Caco-2 (cell line): ENCODE measurements at regions of chr1 and their contacts with region 1.

Region 1: DNA sequence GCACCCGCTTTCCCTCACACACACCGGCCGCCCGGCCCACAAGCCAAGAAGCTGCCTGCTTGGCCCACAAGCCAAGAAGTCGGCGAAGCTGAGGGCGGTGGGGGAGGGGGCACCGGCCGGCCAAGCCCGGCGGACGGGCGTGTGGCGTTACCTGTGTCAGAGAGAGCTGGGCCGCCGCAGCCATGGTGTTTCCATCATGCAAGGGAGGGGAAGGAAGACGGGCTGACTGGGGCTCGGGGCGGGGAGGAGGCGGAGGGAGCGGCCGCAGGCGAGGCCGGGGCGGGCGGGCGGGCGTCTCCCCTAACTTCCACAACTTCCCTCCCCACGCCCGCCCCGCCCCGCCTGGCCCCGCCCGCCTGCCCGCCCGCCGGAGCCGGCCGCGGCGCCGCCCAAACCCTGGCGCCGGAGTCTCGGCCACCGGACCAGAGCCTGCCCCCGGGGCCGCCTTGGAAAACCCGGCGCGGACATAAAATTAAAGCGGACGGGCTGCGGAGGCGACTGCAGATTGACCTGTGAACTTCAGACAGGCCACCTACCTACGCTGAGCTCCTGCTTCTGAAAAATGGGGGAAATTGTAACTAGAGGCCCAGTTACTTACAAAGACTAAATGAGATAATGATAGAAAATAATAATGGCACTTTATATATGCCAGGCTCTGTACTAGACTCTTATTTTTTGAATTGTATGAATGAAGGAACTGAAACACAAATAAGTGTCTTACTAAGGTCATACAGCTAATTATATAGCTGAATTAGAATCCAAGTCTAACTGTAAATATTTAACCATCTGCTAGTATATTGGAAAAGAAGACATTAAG is at the start of gene EPS15:
- DNase-seq: peak; percentile 88 to 91
- H3K4me3 ChIP-seq: peak within 1 kb of the TSS; percentile 85
- H3K4me3 Mint-ChIP-seq: peak within 1 kb of the TSS; percentile 95
- H3K27ac Mint-ChIP-seq: peak within 1 kb of the TSS; percentile 89
- H3K4me1 ChIP-seq: peaks cover 15% of the 10 kb centered on the region
- H3K4me1 Mint-ChIP-seq: peaks cover 11% of the 10 kb centered on the region
- H3K27me3 ChIP-seq: no peaks in the 10 kb centered on the region
- H3K27me3 Mint-ChIP-seq: no peaks in the 10 kb centered on the region
- CTCF ChIP-seq: no peak
- total RNA-seq, gene EPS15: 39.2 and 41.5 TPM in 2 replicates

Region 2: DNA sequence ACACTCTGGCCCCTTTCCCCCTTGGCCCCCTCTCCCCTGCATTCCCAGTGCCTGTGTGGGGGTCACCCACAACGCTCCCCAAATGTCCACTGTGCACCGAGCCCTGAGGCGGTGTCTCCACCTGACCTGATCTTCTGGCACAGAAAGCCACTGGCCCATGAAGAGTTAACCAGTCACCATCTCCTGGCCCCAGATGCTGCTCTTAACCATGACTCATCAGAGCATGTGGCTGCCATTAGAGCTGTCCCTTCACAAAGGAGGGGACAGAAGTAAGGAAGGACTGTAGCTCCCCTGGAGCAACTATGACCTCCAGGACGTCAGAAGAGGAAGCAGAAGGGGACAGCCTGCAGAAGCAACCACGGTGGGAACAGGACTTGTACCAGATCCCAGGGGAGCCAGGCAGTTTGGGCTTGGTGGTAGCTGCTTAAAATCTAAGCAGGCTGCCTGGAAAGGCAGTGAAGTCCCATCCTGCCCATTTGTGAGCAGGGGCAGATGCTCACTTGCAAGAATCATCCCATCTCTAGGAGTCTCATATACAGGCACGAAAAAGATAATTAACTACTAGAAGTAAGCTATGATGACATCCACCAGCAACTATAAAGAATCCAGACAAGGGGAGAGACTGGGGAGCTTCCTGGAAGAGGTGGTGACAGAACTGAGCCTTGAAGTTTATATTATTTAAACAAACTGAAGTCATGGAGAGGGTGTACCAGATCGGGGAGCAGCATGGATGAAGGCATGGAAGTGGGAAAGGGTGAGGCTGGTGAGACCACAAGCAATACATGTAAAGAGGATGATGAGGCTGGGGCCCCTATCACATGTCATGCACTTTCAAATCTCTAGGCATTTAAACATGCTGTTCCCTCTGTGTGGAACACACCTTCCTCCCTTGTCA is 187.8 kb before region 1 on chr1:
- CTCF ChIA-PET with region 1: no interaction called
- POLR2A ChIA-PET with region 1: no interaction called
- intact Hi-C with region 1: loop called (anchors 1 kb)
- DNase-seq: peak; percentile 64 to 78
- H3K4me3 ChIP-seq: peak overlapping the region; percentile 71
- H3K4me3 Mint-ChIP-seq: peak overlapping the region; percentile 83
- H3K27ac Mint-ChIP-seq: peak overlapping the region; percentile 90
- H3K4me1 ChIP-seq: peaks cover 30% of the 10 kb centered on the region
- H3K4me1 Mint-ChIP-seq: peaks cover 19% of the 10 kb centered on the region
- H3K27me3 ChIP-seq: no peaks in the 10 kb centered on the region
- H3K27me3 Mint-ChIP-seq: no peaks in the 10 kb centered on the region
- CTCF ChIP-seq: no peak

Region 3: DNA sequence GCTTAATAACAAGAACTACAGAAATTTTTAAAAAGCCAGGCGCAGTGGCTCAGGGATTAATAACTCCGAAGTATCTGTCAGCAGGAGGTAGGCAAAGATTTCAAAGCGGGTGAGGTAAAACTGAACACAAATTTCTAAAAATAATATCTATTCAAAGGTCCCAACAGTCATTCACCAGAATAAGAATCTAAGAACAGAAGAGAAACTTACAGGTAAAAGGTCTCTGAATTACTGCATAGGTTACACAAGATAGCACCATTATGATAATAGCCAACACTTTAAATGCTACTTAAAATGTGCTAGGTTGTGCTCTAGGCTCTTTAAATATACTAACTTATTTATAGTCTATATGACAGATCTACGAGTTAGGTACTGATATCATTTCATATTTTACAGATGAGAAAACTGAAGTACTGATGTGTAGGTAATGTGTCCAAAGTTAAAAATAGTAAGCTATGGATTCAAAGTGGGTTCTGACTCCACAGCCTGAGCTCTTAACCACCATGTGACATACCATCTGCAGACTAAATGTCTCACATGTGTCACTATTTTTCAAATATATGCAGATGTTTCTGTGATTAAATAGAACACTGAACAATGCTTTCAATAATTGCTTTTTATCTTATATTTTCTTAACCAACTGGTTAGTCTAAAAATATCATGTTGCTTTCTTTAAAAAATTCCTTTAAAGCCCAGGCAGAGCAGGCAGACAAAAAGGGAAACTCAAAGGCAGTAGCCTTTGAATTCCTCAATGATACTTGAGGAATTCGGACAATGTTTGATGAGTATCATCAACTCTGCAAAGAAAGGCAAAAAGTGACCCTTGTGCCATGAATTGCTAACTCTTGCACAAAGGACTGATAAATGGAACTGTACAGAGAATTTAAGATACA is 108.4 kb before region 1 on chr1:
- CTCF ChIA-PET with region 1: no interaction called
- POLR2A ChIA-PET with region 1: no interaction called
- intact Hi-C with region 1: loop called (anchors 2 kb)
- DNase-seq: peak in 1 of 2 experiments; percentile 55
- H3K4me3 ChIP-seq: no peak overlapping the region
- H3K4me3 Mint-ChIP-seq: peak overlapping the region; percentile 29
- H3K27ac Mint-ChIP-seq: peak overlapping the region; percentile 77
- H3K4me1 ChIP-seq: peaks cover 41% of the 10 kb centered on the region
- H3K4me1 Mint-ChIP-seq: peaks cover 8% of the 10 kb centered on the region
- H3K27me3 ChIP-seq: no peaks in the 10 kb centered on the region
- H3K27me3 Mint-ChIP-seq: no peaks in the 10 kb centered on the region
- CTCF ChIP-seq: no peak

Region 4: DNA sequence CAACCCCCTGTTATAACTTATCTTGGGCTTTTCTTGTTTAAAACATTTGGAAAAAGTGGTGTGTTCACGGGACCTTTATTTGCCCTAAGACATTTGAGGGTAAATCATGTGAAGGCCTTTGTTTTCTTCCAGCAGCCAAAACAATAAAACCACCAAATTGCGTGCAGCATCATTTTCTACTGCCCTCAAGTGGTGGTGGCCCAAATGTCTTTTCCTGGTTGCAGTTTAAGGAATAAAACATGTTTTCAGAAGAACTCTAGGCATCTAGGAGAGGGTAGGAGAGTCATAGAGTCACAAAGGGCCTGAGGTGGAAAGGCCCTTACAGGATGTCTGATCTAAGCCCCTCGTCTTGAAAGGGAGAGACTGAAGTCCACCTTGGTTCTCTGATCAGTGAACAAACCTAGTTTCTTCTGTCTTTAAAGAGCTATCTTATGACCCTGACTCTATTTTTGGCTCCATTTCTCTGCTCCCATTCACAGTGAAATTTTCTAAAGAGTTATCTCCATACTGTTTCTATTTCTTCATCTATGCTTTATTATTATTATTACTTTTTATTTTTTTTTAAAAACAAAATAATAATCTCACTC is 15.8 kb after region 1 on chr1:
- CTCF ChIA-PET with region 1: interaction called, 12 read pairs
- POLR2A ChIA-PET with region 1: interaction called, 4 read pairs
- intact Hi-C with region 1: no loop called
- DNase-seq: peak; percentile 36 to 42
- H3K4me3 ChIP-seq: no peak overlapping the region
- H3K4me3 Mint-ChIP-seq: no peak overlapping the region
- H3K27ac Mint-ChIP-seq: no peak overlapping the region
- H3K4me1 ChIP-seq: no peaks in the 10 kb centered on the region
- H3K4me1 Mint-ChIP-seq: no peaks in the 10 kb centered on the region
- H3K27me3 ChIP-seq: no peaks in the 10 kb centered on the region
- H3K27me3 Mint-ChIP-seq: no peaks in the 10 kb centered on the region
- CTCF ChIP-seq: peak; percentile 33 to 65